GM12878 (cell line): ENCODE measurements at regions of chr18 and their contacts with region 1.

Region 1: GRCh38 chr18:2559249-2559648 is 12.1 kb downstream of the METTL4 start:
- DNase-seq: no peak
- ATAC-seq: peak; percentile 51; the same call in 2 of the 3 replicates
- H3K4me3 ChIP-seq: no peak overlapping the region
- H3K27ac ChIP-seq: no peak overlapping the region
- H3K4me1 ChIP-seq: no peaks in the 10 kb centered on the region
- H3K27me3 ChIP-seq: no peaks in the 10 kb centered on the region
- CTCF ChIP-seq: no peak
- EP300 ChIP-seq: no peak
- POLR2A ChIP-seq: no peak
- RAD21 ChIP-seq: no peak

Region 2: DNA sequence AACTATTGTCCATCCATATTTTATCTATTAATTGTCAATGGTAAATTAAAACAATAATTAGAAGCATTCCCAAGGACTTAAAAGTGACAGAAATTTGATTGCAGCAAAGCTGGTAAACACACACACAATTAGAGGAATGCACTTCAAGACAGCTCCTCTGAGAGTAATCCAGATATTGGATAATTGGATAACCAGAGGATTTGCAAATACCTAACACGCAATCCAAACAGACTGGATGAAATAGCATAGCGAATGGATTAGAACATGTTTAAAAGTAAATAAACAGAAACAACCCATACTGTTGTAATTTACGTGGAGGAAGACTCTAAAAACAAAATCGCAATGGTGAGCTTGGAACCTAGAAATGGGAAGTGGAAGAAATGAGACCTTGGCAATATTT is 227.8 kb before region 1 on chr18:
- CTCF ChIA-PET with region 1: no interaction called
- POLR2A ChIA-PET with region 1: no interaction called
- RAD21 ChIA-PET with region 1: no interaction called
- SMC1A ChIA-PET with region 1: interaction called, 3 read pairs
- in situ Hi-C with region 1: loop called (anchors 5 kb)
- intact Hi-C with region 1: no loop called
- DNase-seq: no peak
- ATAC-seq: no peak
- H3K4me3 ChIP-seq: no peak overlapping the region
- H3K27ac ChIP-seq: no peak overlapping the region
- H3K4me1 ChIP-seq: no peaks in the 10 kb centered on the region
- H3K27me3 ChIP-seq: no peaks in the 10 kb centered on the region
- CTCF ChIP-seq: no peak
- EP300 ChIP-seq: no peak
- POLR2A ChIP-seq: no peak
- RAD21 ChIP-seq: no peak